Testis (tissue), 5 donors: ENCODE measurements at regions of chr1 and their contacts with region 1.

Region 1: GRCh38 chr1:22704440-22705067 is 6.1 kb upstream of the EPHB2 start:
- DNase-seq: peak; percentile 94
- H3K4me3 ChIP-seq: no peak overlapping the region
- H3K27ac ChIP-seq: no peak overlapping the region
- H3K4me1 ChIP-seq: no peaks in the 10 kb centered on the region
- H3K27me3 ChIP-seq: no peaks in the 10 kb centered on the region
- CTCF ChIP-seq: peak; percentile 85 to 92 (median 85)
- POLR2A ChIP-seq: no peak

Region 2: DNA sequence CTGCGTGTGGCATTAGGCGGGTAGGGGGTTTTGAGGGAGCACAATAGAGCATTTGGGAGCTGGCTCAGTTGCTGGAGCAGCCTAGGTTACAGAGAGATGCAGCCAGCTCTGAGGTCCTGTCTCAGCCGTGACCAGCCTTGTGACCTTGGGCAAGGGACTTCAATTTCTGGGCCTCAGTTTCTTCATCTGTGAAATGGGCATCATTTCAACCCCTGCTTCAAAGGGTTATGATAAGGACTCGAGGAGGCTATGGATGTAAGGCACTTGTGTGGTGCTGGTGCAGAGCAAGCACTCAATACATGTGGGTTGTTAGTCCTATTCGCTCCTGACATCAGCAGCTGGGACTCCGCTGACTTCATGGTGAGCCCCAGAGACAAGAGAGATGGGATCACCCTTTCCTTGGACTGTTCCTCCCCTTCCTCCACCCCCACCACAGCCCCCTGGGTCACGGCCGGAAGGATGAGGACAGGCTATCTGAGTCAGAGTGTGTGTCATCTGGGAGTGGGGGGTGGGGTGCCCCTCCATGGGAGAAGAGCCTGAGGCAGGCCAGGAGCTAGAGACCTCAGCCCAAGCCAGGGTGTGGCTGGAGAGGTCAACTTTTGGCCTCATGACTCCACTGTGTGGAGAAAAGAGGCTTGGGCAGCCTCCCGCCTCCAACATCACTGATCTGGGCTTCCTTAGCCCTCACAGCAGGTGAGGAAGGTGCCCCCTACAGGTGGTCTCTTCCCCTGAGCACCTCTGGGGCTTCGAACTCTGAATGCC is 324.3 kb before region 1 on chr1:
- intact Hi-C with region 1: no loop called
- DNase-seq: no peak
- H3K4me3 ChIP-seq: no peak overlapping the region
- H3K27ac ChIP-seq: no peak overlapping the region
- H3K4me1 ChIP-seq: no peaks in the 10 kb centered on the region
- H3K27me3 ChIP-seq: no peaks in the 10 kb centered on the region
- CTCF ChIP-seq: no peak
- POLR2A ChIP-seq: no peak

Region 3: DNA sequence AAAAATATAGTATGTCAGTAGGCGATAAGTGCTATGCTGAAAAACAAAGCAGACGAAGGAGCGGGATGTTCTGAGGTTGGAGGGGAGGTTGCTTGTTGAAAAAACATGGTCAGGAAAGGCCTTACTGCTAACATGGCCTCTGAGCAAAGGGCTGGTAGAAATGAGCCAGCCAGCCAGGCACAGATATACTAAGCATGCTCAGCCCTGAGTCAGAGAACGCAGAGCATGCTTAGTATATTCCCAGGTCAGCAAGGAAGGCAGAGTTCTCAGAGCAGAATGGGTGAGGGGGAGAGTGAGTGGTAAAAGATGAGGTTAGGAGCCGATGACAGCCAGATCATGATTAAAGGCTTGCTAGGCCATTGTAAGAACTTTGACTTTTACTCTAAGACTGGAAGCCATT is 216.2 kb before region 1 on chr1:
- intact Hi-C with region 1: no loop called
- DNase-seq: no peak
- H3K4me3 ChIP-seq: no peak overlapping the region
- H3K27ac ChIP-seq: no peak overlapping the region
- H3K4me1 ChIP-seq: no peaks in the 10 kb centered on the region
- H3K27me3 ChIP-seq: no peaks in the 10 kb centered on the region
- CTCF ChIP-seq: no peak
- POLR2A ChIP-seq: no peak

Region 4: DNA sequence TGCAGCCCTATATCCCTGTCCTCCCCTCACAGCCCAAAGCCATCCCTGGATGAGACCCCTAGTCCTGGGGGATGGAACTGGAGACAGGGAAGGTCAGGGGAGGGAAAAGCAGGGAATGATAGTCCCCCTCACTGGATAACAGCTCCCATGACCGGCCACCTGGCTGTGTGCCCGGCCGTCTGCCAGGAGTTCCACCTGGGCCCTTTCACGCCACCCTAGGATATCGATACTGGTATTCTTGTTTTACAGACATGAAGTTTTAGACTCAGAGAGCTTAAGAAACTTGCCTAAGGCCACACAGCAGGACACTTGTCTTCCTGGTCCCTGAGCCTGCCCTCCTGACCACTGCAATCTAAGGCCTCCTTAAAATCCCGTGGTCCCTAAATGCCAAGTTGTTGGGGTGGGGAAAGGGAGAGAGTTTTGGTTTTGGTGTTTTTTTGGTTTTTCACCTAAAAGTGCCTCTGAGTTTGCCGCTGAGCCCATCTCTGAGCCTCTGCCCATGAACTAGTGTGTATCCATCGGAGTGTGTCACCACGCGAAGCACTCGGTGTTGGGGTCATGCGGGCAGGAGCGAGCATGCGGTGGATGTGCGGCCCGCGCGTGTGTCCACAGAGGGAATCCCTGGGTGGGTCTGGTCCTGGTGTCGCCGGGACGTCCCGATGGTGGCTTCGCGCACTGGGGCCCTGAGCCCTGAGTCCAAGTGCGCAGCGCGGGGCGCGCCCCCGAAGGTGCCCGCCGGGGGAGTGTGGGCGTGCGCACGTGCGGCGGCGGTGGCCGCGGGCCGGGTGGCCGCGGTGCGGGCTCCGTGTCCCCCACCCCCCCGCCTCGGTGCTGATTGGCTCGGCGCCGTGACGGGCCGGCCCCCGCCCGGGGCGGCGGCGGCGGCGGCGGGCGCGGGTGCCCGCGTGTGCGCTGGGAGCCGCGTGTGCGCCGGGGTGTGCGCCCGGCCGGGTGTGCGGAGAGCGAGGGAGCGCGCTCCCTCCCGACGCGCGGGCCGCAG is 141.7 kb before region 1 on chr1 and contains the start of gene EPHA8:
- intact Hi-C with region 1: no loop called
- DNase-seq: no peak
- H3K4me3 ChIP-seq: peak within 1 kb of the TSS in 1 of 2 donors; percentile 26
- H3K27ac ChIP-seq: no peak within 1 kb of the TSS
- H3K4me1 ChIP-seq: no peaks in the 10 kb centered on the region
- H3K27me3 ChIP-seq: no peaks in the 10 kb centered on the region
- CTCF ChIP-seq: no peak
- POLR2A ChIP-seq: no peak
- total RNA-seq, gene EPHA8: 5.2 to 6.0 TPM

Region 5: DNA sequence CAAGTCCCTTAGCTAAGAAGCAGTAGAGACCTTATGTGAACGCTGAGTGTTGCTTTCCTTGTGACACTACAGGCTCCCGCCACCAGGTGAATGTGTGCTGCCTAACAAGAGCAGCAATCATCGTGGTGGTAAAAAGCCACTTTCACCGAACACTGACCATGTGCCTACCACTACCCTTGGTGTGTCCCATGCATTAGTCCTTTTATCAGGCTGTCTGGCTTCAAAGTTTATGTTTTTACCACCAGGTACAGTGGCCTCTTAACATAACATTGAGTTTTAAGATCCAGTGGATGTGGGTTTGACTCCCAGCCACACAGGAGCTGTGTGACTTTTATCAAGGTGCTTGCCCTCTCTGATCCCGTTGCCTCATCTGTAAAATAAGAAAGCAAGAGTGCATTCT is 49.9 kb before region 1 on chr1:
- intact Hi-C with region 1: no loop called
- DNase-seq: no peak
- H3K4me3 ChIP-seq: no peak overlapping the region
- H3K27ac ChIP-seq: no peak overlapping the region
- H3K4me1 ChIP-seq: no peaks in the 10 kb centered on the region
- H3K27me3 ChIP-seq: no peaks in the 10 kb centered on the region
- CTCF ChIP-seq: no peak
- POLR2A ChIP-seq: no peak

Region 6: GRCh38 chr1:22892789-22893188 is 188.2 kb after region 1 on chr1:
- intact Hi-C with region 1: loop called (anchors 5 kb)
- DNase-seq: no peak
- H3K4me3 ChIP-seq: no peak overlapping the region
- H3K27ac ChIP-seq: no peak overlapping the region
- H3K4me1 ChIP-seq: no peaks in the 10 kb centered on the region
- H3K27me3 ChIP-seq: no peaks in the 10 kb centered on the region
- CTCF ChIP-seq: no peak
- POLR2A ChIP-seq: no peak